Brain microvascular endothelial cell (primary cell): ENCODE measurements at regions of chr5 and their contacts with region 1.

Region 1: GRCh38 chr5:72366324-72366976 is 46.3 kb downstream of the PTCD2 start:
- DNase-seq: peak; percentile 83
- H3K4me3 ChIP-seq: no peak overlapping the region
- H3K27ac ChIP-seq: no peak overlapping the region
- H3K27me3 ChIP-seq: no peaks in the 10 kb centered on the region
- CTCF ChIP-seq: peak; percentile 83

Region 2: GRCh38 chr5:72847989-72848473 is 481.6 kb after region 1 on chr5:
- in situ Hi-C with region 1: loop called (anchors 25 kb)
- DNase-seq: peak; percentile 94
- H3K4me3 ChIP-seq: peak overlapping the region; percentile 88
- H3K27ac ChIP-seq: peak overlapping the region; percentile 90
- H3K27me3 ChIP-seq: no peaks in the 10 kb centered on the region
- CTCF ChIP-seq: no peak

Region 3: DNA sequence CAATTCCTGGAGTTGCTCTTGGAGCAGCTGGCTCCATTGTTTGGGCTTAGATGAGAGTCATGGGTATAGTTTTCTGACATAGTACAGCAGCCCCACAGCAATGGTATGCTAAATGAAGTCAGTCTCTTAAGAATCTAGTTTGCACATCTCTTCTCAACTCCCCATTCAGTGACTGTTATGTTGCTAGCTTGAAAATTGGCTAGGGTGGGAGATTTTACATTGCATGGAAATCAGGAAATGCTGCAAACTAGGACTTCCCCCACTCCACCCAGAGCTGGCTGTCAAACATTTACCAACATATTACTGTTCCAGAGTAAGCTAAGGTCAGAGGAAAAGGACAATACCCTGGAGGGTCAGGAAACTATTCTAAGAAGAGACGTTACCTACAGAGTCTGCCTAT is 571.8 kb after region 1 on chr5:
- in situ Hi-C with region 1: no loop called
- DNase-seq: no peak
- H3K4me3 ChIP-seq: no peak overlapping the region
- H3K27ac ChIP-seq: no peak overlapping the region
- H3K27me3 ChIP-seq: no peaks in the 10 kb centered on the region
- CTCF ChIP-seq: no peak